Sciatic nerve (tissue), 2 donors: ENCODE measurements at regions of chr3 and their contacts with region 1.

Region 1: DNA sequence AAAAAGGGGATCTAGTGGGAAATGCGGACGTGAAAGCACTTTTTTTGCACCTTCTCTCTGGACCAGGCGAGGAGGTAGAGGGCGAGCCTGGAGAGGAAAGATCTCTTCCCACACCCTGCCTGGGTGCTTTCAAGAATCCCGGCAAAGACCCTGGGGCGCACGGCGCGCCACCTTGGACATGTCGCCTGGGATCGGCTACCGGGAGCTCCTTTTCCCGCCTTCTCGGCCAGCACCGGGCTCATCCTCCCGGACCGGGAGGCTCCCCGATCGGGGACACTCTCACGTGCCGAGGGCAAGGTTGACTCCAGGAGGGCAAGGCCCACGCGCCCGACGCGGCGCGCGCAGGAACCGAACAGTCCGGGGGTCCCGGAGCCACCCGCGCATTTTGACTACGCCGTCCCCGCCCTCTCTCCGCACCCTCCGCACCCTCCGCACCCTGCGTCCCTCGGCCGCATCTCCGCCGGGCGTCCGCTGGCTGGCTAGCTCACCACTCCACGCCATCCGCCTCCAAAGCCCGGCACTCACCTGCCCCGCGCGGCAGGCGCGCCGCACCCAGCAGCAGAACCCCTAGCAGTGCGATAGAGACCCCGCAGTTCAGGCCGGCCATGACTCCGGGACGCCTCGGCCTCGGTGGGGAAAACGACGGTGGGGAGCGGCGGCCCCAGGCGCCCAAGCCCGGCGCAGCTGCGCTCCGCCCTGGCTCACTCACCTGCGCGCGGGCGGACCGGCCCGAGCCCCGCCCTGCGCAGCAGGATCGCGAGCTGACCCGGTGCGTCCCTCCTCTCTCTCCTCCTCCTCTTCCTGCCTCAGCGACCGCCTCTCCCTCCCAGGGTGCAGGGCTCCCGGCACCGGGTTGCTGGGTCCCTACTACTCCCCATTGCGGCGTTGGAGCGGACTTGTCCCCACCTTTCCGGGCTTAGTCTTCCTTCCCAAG is at the start of gene CDCP1:
- DNase-seq: no peak
- ATAC-seq: no peak
- total RNA-seq, gene CDCP1: 1.8 TPM

Region 2: DNA sequence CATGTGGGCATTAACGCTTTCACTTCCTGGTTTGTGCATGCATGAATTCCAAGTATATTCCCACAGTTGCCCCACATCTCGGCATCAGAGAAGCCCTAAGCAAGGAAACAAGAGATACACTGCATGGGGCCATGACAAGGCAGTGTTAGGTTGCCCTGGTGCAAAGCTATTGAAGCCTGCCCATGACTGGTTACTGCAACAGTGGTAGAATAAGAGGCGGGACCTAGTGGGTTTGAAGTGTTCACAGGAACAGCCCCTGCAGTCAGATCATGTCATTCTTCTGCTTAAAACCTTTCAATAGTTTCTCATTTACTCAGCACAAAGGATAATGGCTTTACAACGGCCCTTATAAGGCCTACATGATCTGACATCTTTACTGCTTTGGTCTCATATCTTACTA is 985.1 kb before region 1 on chr3:
- intact Hi-C with region 1: loop called (anchors 5 kb)
- DNase-seq: no peak
- ATAC-seq: no peak

Region 3: DNA sequence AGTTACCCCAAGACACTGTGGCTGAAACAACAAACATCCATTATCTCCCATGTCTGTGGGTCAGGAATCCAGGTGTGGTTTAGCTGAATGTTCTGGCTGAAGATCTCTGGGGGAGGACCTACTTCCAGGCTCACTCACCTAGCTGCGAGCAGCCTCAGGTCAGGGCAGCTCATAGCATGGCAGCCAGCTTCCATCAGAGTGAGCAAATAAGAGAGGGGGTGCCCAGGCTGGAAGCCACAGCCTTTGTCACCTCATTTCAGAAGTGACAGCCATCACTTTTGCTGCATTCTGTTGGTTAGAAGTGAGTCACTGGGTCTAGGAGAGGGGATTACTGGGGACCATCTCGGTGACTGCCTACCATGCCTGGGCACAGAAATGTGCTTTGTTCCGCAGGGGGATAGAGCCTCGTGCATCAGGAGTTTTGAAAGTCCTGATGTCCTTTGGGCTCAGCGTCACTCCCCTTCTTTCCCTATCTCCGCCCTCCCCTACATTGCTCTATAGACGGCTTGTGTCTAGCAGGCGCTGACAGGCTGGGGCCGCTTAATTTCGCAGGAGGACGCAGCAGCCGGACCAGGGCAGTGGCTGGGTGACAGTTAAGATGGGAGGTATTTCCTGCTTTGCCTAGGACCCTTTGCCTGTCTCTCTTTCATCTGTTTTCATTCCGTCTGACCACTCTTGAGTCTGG is 246.1 kb before region 1 on chr3:
- intact Hi-C with region 1: no loop called
- DNase-seq: no peak
- ATAC-seq: no peak